ENCODE measurements at regions of chr3 and their contacts with region 1.

Region 1: DNA sequence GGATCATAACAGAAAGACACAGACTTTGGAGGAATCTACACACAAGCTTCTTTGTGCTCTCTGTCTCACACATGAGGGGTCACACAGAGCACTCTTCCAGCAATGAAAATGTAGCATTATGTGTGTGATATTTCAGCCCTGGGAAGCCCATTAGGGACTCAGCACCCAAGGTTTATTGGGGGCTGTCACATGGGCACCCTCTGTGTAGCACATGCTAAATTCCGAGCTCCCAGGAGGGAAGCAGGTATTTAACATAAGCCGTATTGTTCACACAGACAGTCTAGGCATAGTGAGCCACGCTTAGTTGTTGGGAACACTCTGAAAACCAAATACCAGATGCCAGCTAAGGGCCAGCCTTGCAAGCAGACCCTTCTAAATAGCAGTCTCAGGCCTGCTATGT is 261.6 kb upstream of the MANF start:
- DNase-seq: no peak
- H3K4me3 ChIP-seq: no peak overlapping the region
- H3K27ac ChIP-seq: no peak overlapping the region
- H3K4me1 ChIP-seq: no peaks in the 10 kb centered on the region
- H3K27me3 ChIP-seq: no peaks in the 10 kb centered on the region
- CTCF ChIP-seq: no peak

Region 2: GRCh38 chr3:50873376-50874157 is 250.0 kb before region 1 on chr3:
- dilution Hi-C with region 1: no loop called
- DNase-seq: no peak
- H3K4me3 ChIP-seq: no peak overlapping the region
- H3K27ac ChIP-seq: no peak overlapping the region
- H3K4me1 ChIP-seq: no peaks in the 10 kb centered on the region
- H3K27me3 ChIP-seq: no peaks in the 10 kb centered on the region
- CTCF ChIP-seq: no peak

Region 3: GRCh38 chr3:50913260-50913659 is 210.3 kb before region 1 on chr3:
- dilution Hi-C with region 1: no loop called
- DNase-seq: no peak
- H3K4me3 ChIP-seq: no peak overlapping the region
- H3K27ac ChIP-seq: no peak overlapping the region
- H3K4me1 ChIP-seq: no peaks in the 10 kb centered on the region
- H3K27me3 ChIP-seq: no peaks in the 10 kb centered on the region
- CTCF ChIP-seq: no peak

Region 4: GRCh38 chr3:51163051-51163450 is 39.5 kb after region 1 on chr3:
- dilution Hi-C with region 1: loop called (anchors 5 kb)
- DNase-seq: no peak
- H3K4me3 ChIP-seq: no peak overlapping the region
- H3K27ac ChIP-seq: no peak overlapping the region
- H3K4me1 ChIP-seq: peaks cover 6% of the 10 kb centered on the region
- H3K27me3 ChIP-seq: no peaks in the 10 kb centered on the region
- CTCF ChIP-seq: no peak